ENCODE measurements at regions of chr22 and their contacts with region 1.

Region 1: GRCh38 chr22:40436505-40437451 is 66.4 kb downstream of the SGSM3 start:
- DNase-seq: peak; percentile 58
- H3K4me3 ChIP-seq: no peak overlapping the region
- CTCF ChIP-seq: peak; percentile 48

Region 2: DNA sequence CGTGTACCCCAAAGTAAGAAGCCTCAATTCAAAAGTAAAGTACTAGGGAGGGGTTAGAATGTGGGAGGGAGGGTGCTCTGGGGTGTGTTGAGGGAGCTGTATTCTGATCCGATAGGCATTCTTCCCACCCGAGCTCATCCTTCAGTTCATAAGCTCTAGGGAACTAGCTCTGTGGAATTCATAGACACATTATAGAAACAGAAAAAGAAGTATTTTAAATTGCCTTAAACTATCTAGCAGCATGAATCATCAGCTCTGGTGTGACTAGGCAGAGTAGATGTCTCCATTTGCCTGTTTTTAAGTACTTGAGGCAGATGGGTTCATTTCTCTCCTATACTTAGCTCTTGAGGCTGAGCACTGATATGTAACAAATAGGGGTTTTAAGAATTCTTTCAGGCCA is 73.7 kb before region 1 on chr22:
- in situ Hi-C with region 1: loop called (anchors 10 kb)
- DNase-seq: no peak
- H3K4me3 ChIP-seq: no peak overlapping the region
- CTCF ChIP-seq: no peak

Region 3: GRCh38 chr22:40525249-40525884 is 88.6 kb after region 1 on chr22:
- in situ Hi-C with region 1: loop called (anchors 5 kb)
- DNase-seq: no peak
- H3K4me3 ChIP-seq: no peak overlapping the region
- CTCF ChIP-seq: peak; percentile 81

Region 4: GRCh38 chr22:40645579-40646197 is 208.9 kb after region 1 on chr22:
- in situ Hi-C with region 1: loop called (anchors 5 kb)
- DNase-seq: no peak
- H3K4me3 ChIP-seq: no peak overlapping the region
- CTCF ChIP-seq: no peak